Gastrocnemius medialis (tissue), 4 donors: ENCODE measurements at regions of chr17 and their contacts with region 1.

Region 1: DNA sequence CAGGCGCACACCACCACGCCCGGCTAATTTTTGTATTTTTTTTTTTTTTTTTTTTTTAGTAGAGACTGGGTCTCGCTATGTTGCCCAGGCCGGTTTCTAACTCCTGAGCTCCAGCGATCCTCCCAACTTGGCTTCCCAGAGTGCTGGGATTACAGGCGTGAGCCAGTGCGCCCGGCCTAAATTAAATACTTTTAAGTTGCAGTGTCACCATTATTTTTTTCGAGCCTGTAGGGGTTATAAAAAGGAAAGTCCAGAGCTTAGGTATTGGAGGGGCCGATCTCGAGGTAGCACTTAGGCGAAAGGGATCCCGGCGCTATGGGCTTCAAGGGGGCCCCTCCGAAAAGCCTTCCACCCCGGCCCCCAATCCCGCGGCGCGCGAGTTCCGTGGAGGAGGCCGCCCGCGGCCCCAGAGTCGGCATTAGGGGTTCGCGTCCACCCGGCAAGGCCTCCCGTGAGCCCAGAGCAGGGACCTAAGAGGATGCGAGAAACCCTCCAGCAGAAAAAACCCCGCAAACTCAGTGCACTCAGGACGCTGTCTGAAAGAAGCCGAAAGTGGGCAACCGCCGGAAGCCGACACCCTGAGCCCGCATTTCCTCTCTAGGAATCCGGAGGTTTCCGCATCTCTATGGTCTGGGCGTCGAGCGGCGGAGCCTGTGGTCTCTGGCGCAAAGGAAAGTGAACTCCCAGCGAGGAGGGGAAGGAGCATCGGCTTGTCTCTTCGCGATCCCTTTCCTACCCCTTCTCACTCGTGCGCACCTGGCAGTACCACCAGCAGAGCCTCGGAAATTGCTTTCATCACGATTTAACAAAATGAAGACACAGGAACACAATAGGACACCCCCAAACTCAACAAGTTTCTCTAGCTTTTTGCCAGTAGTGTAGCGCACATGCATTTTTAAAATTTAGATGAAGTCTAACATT is 14.1 kb upstream of the RGS9 start:
- DNase-seq: peak; percentile 62 to 78
- ATAC-seq: peak; percentile 91 to 98
- H3K4me3 ChIP-seq: peak overlapping the region; percentile 77 to 83 (median 79)
- H3K27ac ChIP-seq: peak overlapping the region; percentile 81 to 87 (median 85)
- H3K4me1 ChIP-seq: peaks cover 0 to 4% of the 10 kb centered on the region in 2 donors
- H3K27me3 ChIP-seq: no peaks in the 10 kb centered on the region
- CTCF ChIP-seq: no peak
- POLR2A ChIP-seq: peak in 1 of 2 donors; percentile 19

Region 2: DNA sequence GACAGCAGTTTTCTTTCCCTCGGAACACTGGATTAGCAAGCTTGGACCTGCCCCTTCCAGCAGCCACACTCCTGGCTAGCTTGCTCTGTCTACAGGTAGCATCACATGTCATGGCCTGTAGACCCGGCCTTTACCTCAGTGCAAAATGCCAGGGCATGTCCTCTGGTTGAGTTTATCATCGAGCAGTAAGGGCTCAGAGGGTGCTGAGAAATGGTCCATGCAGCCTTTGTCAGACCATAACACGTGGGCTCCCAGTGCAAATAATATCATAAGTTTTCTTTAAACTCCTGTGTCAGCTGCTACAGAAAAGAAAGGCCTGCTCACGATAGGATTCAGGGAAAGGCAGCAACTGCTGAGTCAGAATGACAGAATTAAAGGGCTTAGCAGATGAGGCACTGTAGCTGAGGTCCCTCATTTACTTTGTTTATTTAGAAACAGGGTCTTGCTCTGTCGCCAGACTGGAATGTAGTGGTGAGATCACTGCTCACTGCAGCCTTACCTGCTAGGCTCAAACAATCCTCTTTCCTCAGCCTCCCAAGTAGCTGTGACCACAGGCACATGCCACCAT is 58.6 kb before region 1 on chr17:
- in situ Hi-C with region 1: no loop called
- intact Hi-C with region 1: no loop called
- DNase-seq: no peak
- ATAC-seq: no peak
- H3K4me3 ChIP-seq: no peak overlapping the region
- H3K27ac ChIP-seq: no peak overlapping the region
- H3K4me1 ChIP-seq: peaks cover 7 to 11% of the 10 kb centered on the region in 2 donors
- H3K27me3 ChIP-seq: no peaks in the 10 kb centered on the region
- CTCF ChIP-seq: no peak
- POLR2A ChIP-seq: no peak

Region 3: GRCh38 chr17:65137021-65137991 is 14.2 kb after region 1 on chr17 and contains the start of gene RGS9:
- in situ Hi-C with region 1: no loop called
- intact Hi-C with region 1: loop called (anchors 2 kb)
- DNase-seq: peak; percentile 49 to 70
- ATAC-seq: peak; percentile 91 to 95
- H3K4me3 ChIP-seq: peak within 1 kb of the TSS; percentile 45 to 59 (median 57)
- H3K27ac ChIP-seq: peak within 1 kb of the TSS in 1 of 4 donors; percentile 25
- H3K4me1 ChIP-seq: peaks cover 4 to 5% of the 10 kb centered on the region in 2 donors
- H3K27me3 ChIP-seq: peaks cover 0 to 12% (median 3%) of the 10 kb centered on the region in 3 donors
- CTCF ChIP-seq: peak; percentile 89 to 98 (median 97)
- POLR2A ChIP-seq: no peak
- total RNA-seq, gene RGS9: 1.2 to 4.4 (median 2.8) TPM